ENCODE measurements at regions of chr22 and their contacts with region 1.

Region 1: GRCh38 chr22:50620593-50621355 is 7.2 kb downstream of the ARSA start:
- DNase-seq: no peak
- ATAC-seq: peak; percentile 82
- H3K4me3 ChIP-seq: peak overlapping the region; percentile 32 to 53
- H3K27ac ChIP-seq: no peak overlapping the region
- H3K4me1 ChIP-seq: peaks cover 5 to 34% of the 10 kb centered on the region in 2 experiments; a peak in 3 of 4 replicates
- H3K27me3 ChIP-seq: peaks cover 6% of the 10 kb centered on the region; the same call in 1 of the 2 replicates
- CTCF ChIP-seq: no peak; a peak in 2 of 6 replicates
- POLR2A ChIP-seq: no peak
- RAD21 ChIP-seq: no peak

Region 2: GRCh38 chr22:50525390-50526068 is 95.2 kb before region 1 on chr22 and contains the start of gene SCO2:
- CTCF ChIA-PET with region 1: interaction called, 11 read pairs
- POLR2A ChIA-PET with region 1: interaction called, 3 read pairs
- RAD21 ChIA-PET with region 1: no interaction called
- intact Hi-C with region 1: loop called (anchors 5 kb)
- DNase-seq: peak; percentile 93
- ATAC-seq: peak; percentile 57
- H3K4me3 ChIP-seq: peak within 1 kb of the TSS; percentile 78 to 85
- H3K27ac ChIP-seq: peak within 1 kb of the TSS; percentile 100
- H3K4me1 ChIP-seq: peaks cover 13 to 64% of the 10 kb centered on the region in 2 experiments; a peak in 3 of 4 replicates
- H3K27me3 ChIP-seq: no peaks in the 10 kb centered on the region
- CTCF ChIP-seq: peak in 2 of 3 experiments; percentile 47 to 55; a peak in 4 of 6 replicates
- POLR2A ChIP-seq: peak; percentile 79
- RAD21 ChIP-seq: no peak
- total RNA-seq, gene SCO2: 7.0 TPM

Region 3: DNA sequence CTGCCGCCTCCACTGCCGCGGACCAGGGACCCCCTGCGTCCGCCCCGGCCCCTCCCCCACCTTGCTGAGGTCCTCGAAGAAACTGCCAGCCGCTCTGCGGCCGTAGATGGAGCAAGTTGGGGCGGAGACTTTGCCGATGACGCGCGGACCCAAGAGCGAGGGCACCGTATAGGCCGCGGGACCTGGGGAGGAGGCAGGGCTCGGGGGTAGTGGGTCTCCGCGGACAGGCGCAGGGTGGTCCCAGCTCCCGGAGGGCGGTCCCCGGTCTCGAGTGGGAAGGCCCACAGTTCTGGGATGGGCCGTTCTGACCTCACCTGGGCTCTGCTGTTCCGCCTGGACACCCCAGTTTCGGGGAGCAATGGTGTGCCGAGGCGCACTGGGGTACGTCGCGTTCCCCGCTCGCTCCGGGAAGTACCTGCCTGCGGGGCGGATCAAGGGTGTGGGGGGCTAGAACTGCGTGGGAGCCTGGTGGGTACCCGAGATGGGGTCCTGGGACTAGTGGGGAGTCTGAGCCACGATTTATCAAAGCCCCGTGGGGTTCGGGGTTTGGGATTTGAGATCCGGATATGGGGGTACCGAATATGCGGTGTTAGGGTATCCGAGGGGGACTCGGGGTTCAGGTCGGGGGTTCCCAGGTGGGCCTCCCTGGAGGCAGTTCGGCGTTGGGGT is 89.8 kb before region 1 on chr22:
- CTCF ChIA-PET with region 1: interaction called, 11 read pairs
- POLR2A ChIA-PET with region 1: interaction called, 3 read pairs
- RAD21 ChIA-PET with region 1: interaction called in 1 of 2 experiments, 4 read pairs
- intact Hi-C with region 1: loop called (anchors 5 kb)
- DNase-seq: peak; percentile 76
- ATAC-seq: peak; percentile 59
- H3K4me3 ChIP-seq: peak overlapping the region; percentile 92 to 96
- H3K27ac ChIP-seq: peak overlapping the region; percentile 100
- H3K4me1 ChIP-seq: peaks cover 11 to 67% of the 10 kb centered on the region in 2 experiments; a peak in 3 of 4 replicates
- H3K27me3 ChIP-seq: no peaks in the 10 kb centered on the region
- CTCF ChIP-seq: no peak
- POLR2A ChIP-seq: peak; percentile 28
- RAD21 ChIP-seq: no peak

Region 4: DNA sequence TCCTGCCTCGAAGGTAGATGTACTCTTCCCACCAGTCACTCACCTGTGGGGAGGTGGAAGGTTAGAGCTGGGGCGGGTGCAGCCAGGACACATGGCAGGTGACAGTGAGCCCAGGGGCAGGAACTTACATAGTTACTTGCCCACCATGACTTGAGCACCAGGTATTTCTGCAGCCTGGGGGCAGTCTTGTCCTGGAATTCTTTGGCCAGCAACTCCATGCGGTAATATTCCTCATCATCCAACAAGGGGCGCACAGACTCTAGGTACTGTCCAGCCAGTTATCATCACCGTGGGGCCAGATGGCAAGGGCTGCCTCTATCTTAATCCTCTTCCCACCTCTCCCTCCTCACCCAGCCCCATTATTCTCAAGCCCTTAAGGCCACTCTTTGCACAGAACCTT is 44.7 kb before region 1 on chr22:
- CTCF ChIA-PET with region 1: interaction called, 16 read pairs
- POLR2A ChIA-PET with region 1: no interaction called
- RAD21 ChIA-PET with region 1: interaction called, 3 to 4 read pairs
- intact Hi-C with region 1: loop called (anchors 1 kb)
- DNase-seq: peak; percentile 52
- ATAC-seq: peak; percentile 81
- H3K4me3 ChIP-seq: no peak overlapping the region
- H3K27ac ChIP-seq: no peak overlapping the region
- H3K4me1 ChIP-seq: peaks cover 0 to 5% of the 10 kb centered on the region in 2 experiments; a peak in 2 of 4 replicates
- H3K27me3 ChIP-seq: no peaks in the 10 kb centered on the region
- CTCF ChIP-seq: peak; percentile 56 to 98 (median 69)
- POLR2A ChIP-seq: no peak
- RAD21 ChIP-seq: peak; percentile 94

Region 5: DNA sequence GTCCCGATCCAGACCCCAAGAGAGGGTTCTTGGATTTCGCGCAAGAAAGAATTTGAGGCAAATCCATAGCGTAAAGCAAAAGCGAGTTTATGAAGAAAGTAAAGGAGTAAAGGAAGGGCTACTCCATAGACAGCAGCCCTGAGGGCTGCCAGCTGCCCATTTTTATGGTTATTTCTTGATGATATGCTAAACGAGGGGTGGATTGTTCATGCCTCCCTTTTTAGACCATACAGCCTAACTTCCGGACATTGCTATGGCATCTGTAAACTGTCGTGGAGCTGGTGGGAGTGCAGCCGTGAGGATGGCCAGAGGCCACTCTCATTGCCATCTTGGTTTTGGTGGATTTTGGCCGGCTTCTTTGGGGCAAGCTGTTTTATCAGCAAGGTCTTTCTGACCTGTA is 32.5 kb after region 1 on chr22:
- CTCF ChIA-PET with region 1: no interaction called
- POLR2A ChIA-PET with region 1: no interaction called
- RAD21 ChIA-PET with region 1: no interaction called
- intact Hi-C with region 1: no loop called
- DNase-seq: no peak
- ATAC-seq: no peak
- H3K4me3 ChIP-seq: no peak overlapping the region
- H3K27ac ChIP-seq: no peak overlapping the region
- H3K4me1 ChIP-seq: peaks cover 5 to 29% of the 10 kb centered on the region in 2 experiments
- H3K27me3 ChIP-seq: no peaks in the 10 kb centered on the region
- CTCF ChIP-seq: no peak
- POLR2A ChIP-seq: no peak
- RAD21 ChIP-seq: no peak

Measured in HCT116 (cell line).